HepG2 (cell line): ENCODE measurements at regions of chr1 and their contacts with region 1.

Region 1: DNA sequence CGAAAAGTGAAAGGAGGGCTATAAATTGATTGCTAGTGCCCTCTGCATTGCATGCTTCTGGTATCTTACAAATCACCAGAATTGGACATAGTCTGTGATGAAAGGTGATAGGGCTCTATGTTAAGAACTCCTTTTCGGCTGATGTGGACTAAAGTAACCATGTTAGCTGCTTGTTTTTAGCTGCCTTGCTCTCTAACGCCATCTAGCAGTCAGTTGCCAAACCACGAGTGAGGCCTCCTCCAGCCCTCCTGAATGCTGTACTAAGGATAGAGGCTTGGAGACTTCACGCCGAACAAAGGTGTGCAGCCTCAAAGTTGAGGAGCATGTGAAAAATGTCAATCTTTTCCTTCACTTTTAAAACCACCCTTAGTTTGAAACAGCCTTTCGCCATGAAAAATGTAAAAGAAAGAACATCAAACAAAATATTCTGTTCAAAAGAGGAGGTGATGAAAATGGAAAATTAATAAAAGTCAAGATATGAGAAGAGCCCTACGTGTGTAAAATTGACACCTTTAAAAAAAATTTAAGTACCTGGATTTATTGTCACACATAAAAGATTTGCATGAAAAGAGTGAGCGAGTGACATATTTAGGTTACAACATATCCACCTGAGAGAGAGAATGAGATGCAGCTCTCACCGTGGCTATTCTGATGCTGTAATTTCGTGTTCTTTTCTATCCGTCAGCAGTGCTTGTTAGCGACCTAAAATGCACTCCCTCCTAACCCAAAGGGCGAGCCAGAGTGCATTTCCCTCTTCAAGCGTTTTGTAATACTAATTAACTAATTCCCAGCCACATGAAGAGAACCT is 8.1 kb downstream of the LRRC53 start:
- DNase-seq: peak; percentile 38
- ATAC-seq: peak; percentile 99
- H3K4me3 ChIP-seq: no peak overlapping the region
- H3K27ac ChIP-seq: no peak overlapping the region
- H3K4me1 ChIP-seq: no peaks in the 10 kb centered on the region
- H3K27me3 ChIP-seq: no peaks in the 10 kb centered on the region
- CTCF ChIP-seq: peak; percentile 78
- EP300 ChIP-seq: no peak
- POLR2A ChIP-seq: no peak
- RAD21 ChIP-seq: no peak

Region 2: DNA sequence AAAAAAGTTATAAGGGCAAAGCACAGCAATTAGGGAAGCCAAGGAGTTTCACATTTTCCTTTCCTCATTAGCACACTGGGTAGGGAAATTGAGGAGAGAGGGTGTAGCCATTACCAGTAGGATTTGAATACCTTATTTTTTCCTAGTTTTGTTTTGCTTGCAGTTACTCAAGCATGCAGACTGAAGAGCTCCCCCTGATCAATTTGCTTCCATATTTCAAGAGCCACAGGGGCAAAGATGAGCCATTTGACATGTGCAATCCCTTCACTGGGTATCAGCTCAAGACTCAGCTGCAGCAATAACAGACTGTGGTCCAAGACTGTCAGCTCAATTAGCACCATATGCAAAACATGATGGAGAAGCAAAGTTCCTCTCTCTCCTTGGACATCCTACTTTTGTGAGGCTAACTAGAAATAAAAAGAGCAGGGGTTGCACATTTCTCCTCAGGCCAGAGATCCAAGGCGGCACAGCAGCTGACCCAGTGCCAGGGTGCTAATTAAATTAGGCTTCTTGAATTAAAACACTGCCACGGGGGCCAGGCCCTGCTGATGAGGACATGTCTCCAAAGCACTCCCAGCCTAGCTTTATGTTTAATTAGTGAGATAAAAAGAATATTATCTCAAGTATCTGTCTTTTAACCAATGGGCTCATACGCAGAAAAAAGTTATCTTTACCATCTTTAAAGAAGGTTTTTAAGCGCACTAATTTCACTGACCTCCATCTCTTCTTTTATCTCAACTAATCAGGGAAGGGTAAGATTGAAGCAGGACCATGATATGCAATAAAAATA is 44.8 kb after region 1 on chr1:
- CTCF ChIA-PET with region 1: no interaction called
- POLR2A ChIA-PET with region 1: no interaction called
- in situ Hi-C with region 1: no loop called
- intact Hi-C with region 1: no loop called
- DNase-seq: no peak
- ATAC-seq: no peak
- H3K4me3 ChIP-seq: no peak overlapping the region
- H3K27ac ChIP-seq: no peak overlapping the region
- H3K4me1 ChIP-seq: no peaks in the 10 kb centered on the region
- H3K27me3 ChIP-seq: no peaks in the 10 kb centered on the region
- CTCF ChIP-seq: no peak
- EP300 ChIP-seq: no peak
- POLR2A ChIP-seq: no peak
- RAD21 ChIP-seq: no peak

Region 3: DNA sequence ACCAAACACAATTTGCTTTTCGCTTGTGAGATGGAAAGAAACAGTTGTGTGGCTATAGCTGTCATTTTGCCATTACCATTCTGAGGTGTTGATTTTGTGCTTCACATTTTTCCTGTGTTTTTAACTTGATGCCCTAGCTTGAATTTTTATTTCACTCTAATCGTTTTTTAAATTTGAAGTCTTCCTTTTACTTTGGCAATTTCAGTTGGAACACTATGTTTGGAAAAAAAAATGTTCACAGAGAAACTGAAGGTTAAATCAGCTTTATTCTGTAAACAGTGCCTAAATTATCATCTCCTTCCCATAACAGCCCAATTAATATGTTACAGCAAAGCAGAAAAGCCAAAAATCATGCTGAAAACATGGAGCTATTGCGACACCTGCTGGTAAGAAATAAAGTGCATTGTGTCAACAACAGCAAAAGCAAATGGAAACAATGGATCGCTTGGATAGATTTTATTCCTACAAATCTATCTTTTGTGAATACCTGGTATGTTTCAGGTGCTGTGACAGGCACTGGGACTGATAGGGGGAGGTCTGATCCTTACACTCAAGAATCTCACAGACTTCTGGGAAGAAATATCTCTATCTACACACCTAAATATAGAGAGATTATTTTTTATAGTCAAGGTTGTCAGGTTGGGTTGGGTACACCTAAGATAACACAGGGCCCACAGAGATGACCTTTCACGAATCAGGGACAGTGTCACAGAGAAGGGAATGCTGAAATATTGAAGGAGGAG is 185.5 kb after region 1 on chr1:
- CTCF ChIA-PET with region 1: no interaction called
- POLR2A ChIA-PET with region 1: no interaction called
- in situ Hi-C with region 1: no loop called
- intact Hi-C with region 1: loop called (anchors 10 kb)
- DNase-seq: peak; percentile 53
- ATAC-seq: peak; percentile 85
- H3K4me3 ChIP-seq: no peak overlapping the region
- H3K27ac ChIP-seq: no peak overlapping the region
- H3K4me1 ChIP-seq: peaks cover 8% of the 10 kb centered on the region
- H3K27me3 ChIP-seq: no peaks in the 10 kb centered on the region
- CTCF ChIP-seq: peak; percentile 85
- EP300 ChIP-seq: no peak
- POLR2A ChIP-seq: no peak
- RAD21 ChIP-seq: peak; percentile 60